Cardiac septum (tissue), 1 donor: ENCODE measurements at regions of chr19 and their contacts with region 1.

Region 1: GRCh38 chr19:51986309-51987291 is at the start of gene ZNF350:
- DNase-seq: peak; percentile 98
- total RNA-seq, gene ZNF350: 8.2 TPM

Region 2: GRCh38 chr19:51799034-51799773 is 187.4 kb before region 1 on chr19:
- intact Hi-C with region 1: no loop called
- DNase-seq: peak; percentile 91

Region 3: DNA sequence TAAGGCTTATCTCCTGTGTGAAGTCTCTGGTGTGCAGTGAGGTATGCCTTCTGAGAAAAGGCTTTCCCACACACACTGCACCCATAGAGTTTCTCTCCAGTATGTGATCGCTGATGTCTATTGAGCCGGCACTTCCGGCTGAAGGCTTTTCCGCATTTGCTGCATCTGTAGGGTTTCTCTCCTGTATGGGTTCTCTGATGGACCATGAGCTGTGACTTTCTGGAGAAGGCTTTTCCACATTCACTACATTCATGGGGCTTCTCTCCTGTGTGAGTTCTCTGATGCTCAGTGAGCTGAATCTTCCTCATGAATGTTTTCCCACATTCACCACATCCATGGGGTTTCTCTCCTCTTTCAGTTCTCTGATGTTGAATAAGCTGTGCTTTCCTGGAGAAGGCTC is 113.5 kb before region 1 on chr19:
- intact Hi-C with region 1: no loop called
- DNase-seq: no peak

Region 4: GRCh38 chr19:51887522-51888498 is 98.8 kb before region 1 on chr19 and contains the start of gene ZNF577:
- intact Hi-C with region 1: loop called (anchors 5 kb)
- DNase-seq: peak; percentile 95
- total RNA-seq, gene ZNF577: 9.4 TPM

Region 5: DNA sequence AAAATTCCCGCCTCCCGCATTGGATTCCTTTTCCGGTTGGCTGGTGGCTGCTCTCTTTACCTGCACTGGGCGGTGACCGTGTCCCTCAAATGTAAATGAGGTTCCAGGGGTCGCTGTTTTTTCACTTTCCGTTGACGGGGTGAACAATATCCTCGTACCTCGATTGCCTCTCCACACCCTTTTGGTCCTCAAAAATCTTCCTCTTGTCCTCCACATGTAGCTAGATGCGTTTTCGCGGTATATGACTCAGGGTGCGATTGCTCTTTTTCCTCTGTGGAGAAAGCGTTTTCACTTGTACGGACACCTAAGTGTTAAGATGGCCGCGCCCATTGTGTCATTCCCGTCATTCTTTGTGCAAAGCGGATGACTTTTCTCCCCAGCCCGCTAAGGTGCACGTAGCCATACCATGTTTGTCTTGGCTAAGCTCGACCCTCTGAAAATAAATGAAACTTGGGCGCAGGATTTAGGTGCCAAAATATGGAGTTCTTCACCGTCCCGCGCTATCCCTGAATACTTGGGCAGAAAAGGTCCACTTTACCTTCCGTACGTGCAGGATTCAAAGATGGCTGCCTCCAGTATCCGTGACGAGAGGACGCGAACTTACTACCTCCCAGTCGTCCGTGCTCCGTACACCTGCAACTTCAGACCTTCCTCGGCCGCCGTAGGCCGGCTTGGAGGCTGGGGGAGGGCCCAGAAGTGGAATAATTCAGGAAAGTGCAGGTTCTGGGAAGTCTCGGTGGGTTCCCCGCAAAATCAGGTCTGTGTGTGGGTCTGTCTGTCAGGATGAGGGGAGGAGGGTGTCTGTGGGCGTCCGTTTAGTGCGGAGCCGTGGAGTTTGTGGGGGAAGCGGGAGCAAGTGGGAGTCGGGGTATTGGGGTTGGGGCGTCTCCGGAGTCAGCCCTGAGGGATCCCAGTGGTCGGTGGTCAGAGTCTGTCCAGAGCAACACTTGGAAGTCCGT is 59.5 kb before region 1 on chr19 and contains the start of gene ZNF613:
- intact Hi-C with region 1: loop called (anchors 1 kb)
- DNase-seq: peak; percentile 94
- total RNA-seq, gene ZNF613: 3.8 TPM

Region 6: GRCh38 chr19:52028027-52028779 is 41.6 kb after region 1 on chr19 and contains the start of gene ZNF614:
- intact Hi-C with region 1: loop called (anchors 5 kb)
- DNase-seq: peak; percentile 94
- total RNA-seq, gene ZNF614: 6.4 TPM

Region 7: GRCh38 chr19:52048555-52049501 is 62.2 kb after region 1 on chr19 and contains the start of gene ZNF432:
- intact Hi-C with region 1: loop called (anchors 5 kb)
- DNase-seq: peak; percentile 97
- total RNA-seq, gene ZNF432: 9.6 TPM